ENCODE measurements at regions of chrX and their contacts with region 1.

Region 1: DNA sequence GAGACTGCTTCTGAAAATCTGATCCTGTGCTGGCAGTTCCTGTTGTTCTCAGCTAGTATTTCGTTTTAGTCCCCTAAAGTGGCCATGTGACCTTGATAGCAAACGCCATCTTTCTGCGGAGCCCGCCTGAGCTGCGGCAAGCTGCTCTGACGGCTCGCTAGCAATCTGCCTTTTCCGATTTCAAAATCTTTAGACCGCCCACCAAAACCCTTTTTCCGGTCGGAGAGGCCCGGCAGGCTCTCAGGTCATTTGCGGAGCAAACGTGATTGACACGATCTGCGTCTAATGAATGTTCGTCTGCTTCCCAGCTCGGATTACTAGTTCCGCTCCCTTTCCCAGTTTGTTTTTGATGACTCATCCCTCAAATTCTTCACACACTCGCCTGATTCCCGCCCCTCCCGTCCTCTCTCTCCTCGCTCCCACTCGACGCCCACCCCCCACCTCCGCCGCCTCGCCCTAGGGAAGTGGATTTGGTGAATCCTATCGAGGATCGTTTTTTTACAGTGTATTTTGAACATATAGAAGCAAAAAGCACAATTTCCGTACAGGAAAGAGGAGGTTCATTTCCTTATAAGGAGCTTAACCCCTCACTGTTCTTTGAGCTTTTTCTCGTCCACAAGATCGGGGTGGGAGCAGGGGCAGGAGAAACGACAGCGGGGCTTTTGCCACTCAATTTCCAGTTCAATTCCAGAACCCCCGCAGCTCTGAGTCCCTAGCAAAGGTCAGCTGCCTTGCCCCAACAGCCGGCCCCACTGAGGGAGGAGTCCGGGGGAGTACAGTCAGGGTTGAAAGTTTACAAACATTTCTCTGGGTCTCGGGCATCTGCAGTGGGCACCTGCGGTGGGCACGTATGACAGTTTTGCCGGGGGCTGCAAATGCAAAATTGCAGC is 37.5 kb downstream of the NLGN3 start:
- DNase-seq: peak; percentile 80
- H3K4me3 Mint-ChIP-seq: peak overlapping the region; percentile 91
- H3K27ac Mint-ChIP-seq: peak overlapping the region; percentile 98
- H3K4me1 Mint-ChIP-seq: peaks cover 26% of the 10 kb centered on the region
- H3K27me3 Mint-ChIP-seq: no peaks in the 10 kb centered on the region

Region 2: GRCh38 chrX:70970482-70970995 is 211.6 kb before region 1 on chrX:
- intact Hi-C with region 1: loop called (anchors 1 kb)
- DNase-seq: no peak
- H3K4me3 Mint-ChIP-seq: no peak overlapping the region
- H3K27ac Mint-ChIP-seq: no peak overlapping the region
- H3K4me1 Mint-ChIP-seq: peaks cover 6% of the 10 kb centered on the region
- H3K27me3 Mint-ChIP-seq: peaks cover 8% of the 10 kb centered on the region

Region 3: DNA sequence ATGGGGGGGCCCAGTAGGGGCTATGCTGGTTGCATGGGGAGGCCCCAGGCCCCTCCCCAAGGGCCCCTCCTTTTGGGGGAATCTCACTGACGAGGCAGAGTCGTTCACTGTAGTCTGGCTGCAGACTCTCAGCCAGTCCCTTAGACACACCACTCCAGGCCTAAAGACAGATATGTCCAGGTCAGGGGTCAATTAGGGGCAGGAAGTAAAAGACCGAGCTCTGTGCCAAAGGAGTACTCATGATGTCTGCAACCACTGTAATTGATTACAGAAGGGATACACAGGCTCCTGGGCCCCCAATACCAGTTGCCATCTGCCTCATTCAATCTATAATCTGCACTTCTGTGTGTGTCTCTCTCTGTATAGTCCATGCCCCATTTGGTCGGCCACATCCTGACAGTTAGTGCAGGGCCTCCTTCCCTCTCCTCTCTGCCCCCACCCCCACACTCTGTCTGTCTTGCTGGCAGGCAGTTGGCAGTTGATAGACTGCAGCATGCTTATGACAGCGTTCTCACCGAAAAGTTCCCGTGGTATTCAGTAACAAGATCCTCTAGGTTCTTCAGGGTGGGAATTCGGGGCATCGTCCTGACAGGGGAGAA is 74.3 kb before region 1 on chrX:
- intact Hi-C with region 1: no loop called
- DNase-seq: peak; percentile 19
- H3K4me3 Mint-ChIP-seq: peak overlapping the region; percentile 99
- H3K27ac Mint-ChIP-seq: peak overlapping the region; percentile 80
- H3K4me1 Mint-ChIP-seq: peaks cover 69% of the 10 kb centered on the region
- H3K27me3 Mint-ChIP-seq: no peaks in the 10 kb centered on the region

Region 4: DNA sequence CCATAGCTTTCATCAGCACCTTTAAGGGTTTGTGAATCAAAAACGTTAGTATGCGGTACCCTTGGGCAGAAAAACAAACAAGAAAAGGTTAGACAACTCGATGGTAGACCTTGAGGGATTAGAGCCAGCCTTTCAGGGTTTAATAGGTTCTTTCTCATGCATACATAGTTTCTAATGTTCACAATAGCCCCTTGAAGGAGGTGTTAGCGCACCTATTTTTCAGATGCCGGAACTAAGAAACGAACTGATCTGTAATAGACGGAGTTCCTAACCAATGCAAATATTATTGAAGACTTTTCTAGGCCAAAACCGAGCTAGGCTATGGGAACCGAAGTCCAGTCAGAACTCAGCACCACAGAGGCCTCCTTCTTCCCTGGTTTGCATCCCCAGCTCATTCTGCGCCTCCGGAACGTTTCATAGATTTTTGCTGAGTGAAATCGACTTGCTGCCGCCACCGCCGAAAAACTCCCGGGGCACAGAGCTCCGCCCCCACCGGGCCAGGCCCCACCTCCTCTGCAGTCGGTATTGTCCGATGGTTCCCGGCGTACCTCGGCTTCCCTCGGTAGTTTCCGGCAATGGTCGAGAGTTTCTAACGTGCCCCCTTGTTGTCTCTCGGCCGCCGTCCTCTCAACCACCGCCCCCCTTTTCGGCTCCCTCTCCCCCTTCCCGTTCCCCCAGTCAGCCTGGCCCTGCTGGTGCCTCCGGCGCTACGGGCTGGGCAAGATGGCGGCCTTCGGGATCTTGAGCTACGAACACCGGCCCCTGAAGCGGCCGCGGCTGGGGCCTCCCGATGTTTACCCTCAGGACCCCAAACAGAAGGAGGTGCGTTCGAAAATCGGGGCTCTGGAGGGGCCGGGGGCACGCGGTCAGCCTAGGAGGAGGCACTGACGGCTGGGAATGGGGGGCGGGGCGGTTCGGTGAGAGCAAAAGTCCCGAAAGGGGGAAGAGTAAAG is 63.8 kb before region 1 on chrX and contains the start of gene MED12:
- intact Hi-C with region 1: loop called (anchors 1 kb)
- DNase-seq: peak; percentile 76
- H3K4me3 Mint-ChIP-seq: peak within 1 kb of the TSS; percentile 85
- H3K27ac Mint-ChIP-seq: peak within 1 kb of the TSS; percentile 82
- H3K4me1 Mint-ChIP-seq: peaks cover 20% of the 10 kb centered on the region
- H3K27me3 Mint-ChIP-seq: no peaks in the 10 kb centered on the region
- total RNA-seq, gene MED12: 59.9 and 65.4 TPM in 2 replicates

Region 5: GRCh38 chrX:71254092-71254941 is 72.2 kb after region 1 on chrX and contains the start of gene ZMYM3:
- intact Hi-C with region 1: loop called (anchors 1 kb)
- DNase-seq: peak; percentile 69
- H3K4me3 Mint-ChIP-seq: peak within 1 kb of the TSS; percentile 88
- H3K27ac Mint-ChIP-seq: peak within 1 kb of the TSS; percentile 71
- H3K4me1 Mint-ChIP-seq: peaks cover 30% of the 10 kb centered on the region
- H3K27me3 Mint-ChIP-seq: no peaks in the 10 kb centered on the region
- total RNA-seq, gene ZMYM3: 12.6 and 13.2 TPM in 2 replicates

Region 6: DNA sequence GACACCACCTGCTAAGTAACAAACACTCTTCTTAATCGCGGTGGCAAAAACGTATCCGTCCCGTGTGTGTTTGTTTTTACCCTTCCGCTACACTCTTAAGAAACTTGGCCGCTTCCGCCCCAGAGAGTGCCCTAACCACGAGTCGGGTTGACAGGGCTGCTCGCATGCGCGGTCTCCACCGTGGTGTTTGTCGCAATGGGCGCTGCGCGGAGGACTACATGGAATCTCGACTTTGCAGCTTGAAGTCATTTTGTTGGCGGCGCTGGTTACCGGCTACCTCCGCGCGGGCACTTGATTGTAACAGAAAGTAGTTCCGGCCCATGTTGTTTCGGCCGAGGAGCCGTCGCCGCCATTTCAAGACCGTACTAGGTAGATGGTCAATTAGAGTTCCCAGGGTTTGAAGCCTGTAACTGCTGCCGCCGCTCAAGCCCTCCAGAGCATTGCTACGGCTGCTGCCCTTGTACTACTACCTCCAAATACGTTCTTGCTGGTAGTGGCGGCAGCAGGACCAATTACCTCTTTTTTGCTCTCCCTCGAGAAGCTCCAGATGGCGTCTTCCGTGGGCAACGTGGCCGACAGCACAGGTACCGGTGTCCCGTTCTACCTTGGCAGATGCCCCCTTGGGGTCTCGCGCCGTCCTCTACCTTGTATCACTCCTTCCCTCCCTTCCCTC is 350.7 kb after region 1 on chrX and contains the start of gene OGT:
- intact Hi-C with region 1: loop called (anchors 1 kb)
- DNase-seq: peak; percentile 88
- H3K4me3 Mint-ChIP-seq: peak within 1 kb of the TSS; percentile 95
- H3K27ac Mint-ChIP-seq: peak within 1 kb of the TSS; percentile 100
- H3K4me1 Mint-ChIP-seq: peaks cover 26% of the 10 kb centered on the region
- H3K27me3 Mint-ChIP-seq: no peaks in the 10 kb centered on the region
- total RNA-seq, gene OGT: 295 and 305 TPM in 2 replicates

Measured in activated T-helper 1 cell treated with anti-CD3 and anti-CD28 coated beads, Interleukin-12 subunit alpha, Interleukin-12 subunit beta, Interleukin-2, Interleukin-4 antibody, amounts not matched to agents 30 ng/mL and 10 ng/mL and 1 ng/mL, durations not matched to agents 14 hours and 24 hours and 36 hours (primary cell).